MCF 10A (cell line): ENCODE measurements at regions of chr3 and their contacts with region 1.

Region 1: GRCh38 chr3:16550676-16551341 is 37.3 kb upstream of the RFTN1 start:
- DNase-seq: peak; percentile 90
- H3K4me3 Mint-ChIP-seq: no peak overlapping the region
- H3K27ac Mint-ChIP-seq: peak overlapping the region; percentile 54
- H3K4me1 Mint-ChIP-seq: peaks cover 22% of the 10 kb centered on the region
- H3K27me3 Mint-ChIP-seq: peaks cover 20% of the 10 kb centered on the region
- CTCF ChIP-seq: peak; percentile 82

Region 2: GRCh38 chr3:16280671-16281070 is 270.1 kb before region 1 on chr3:
- CTCF ChIA-PET with region 1: interaction called, 19 read pairs
- POLR2A ChIA-PET with region 1: no interaction called
- intact Hi-C with region 1: no loop called
- DNase-seq: no peak
- H3K4me3 Mint-ChIP-seq: no peak overlapping the region
- H3K27ac Mint-ChIP-seq: no peak overlapping the region
- H3K4me1 Mint-ChIP-seq: no peaks in the 10 kb centered on the region
- H3K27me3 Mint-ChIP-seq: no peaks in the 10 kb centered on the region
- CTCF ChIP-seq: no peak